ENCODE measurements at regions of chr11 and their contacts with region 1.

Region 1: GRCh38 chr11:86218125-86219084 is 26.1 kb upstream of the EED start:
- DNase-seq: peak; percentile 66
- ATAC-seq: peak; percentile 96
- H3K4me3 ChIP-seq: peak overlapping the region; percentile 28 to 50
- H3K27ac ChIP-seq: no peak overlapping the region
- H3K4me1 ChIP-seq: peaks cover 0 to 10% of the 10 kb centered on the region in 2 experiments; a peak in 1 of 4 replicates
- H3K27me3 ChIP-seq: no peaks in the 10 kb centered on the region
- CTCF ChIP-seq: peak; percentile 71 to 92 (median 87); a peak in 5 of 6 replicates
- POLR2A ChIP-seq: no peak
- RAD21 ChIP-seq: peak; percentile 81

Region 2: DNA sequence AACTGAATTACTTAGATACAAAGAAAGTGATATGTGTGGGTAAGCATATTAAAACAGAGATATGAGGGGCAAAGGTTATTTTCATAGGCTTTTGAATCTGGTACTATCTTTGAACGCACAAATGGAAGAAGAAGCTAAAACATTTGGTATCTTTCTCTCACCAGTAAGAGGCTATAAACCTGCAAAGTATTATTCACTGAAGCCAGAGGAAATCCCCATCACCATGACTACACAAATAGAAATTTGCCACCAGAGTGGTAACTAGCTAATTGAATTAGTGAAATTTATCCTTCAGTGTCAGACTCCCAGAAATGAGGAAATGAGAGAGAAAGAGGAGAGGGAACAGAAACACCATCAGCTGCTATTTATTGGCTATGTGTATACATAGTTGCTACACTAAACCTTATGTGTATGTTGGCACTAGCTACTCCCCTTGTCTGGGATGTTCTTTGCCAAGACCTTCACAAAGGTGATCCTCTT is 1094.6 kb before region 1 on chr11:
- CTCF ChIA-PET with region 1: no interaction called
- POLR2A ChIA-PET with region 1: no interaction called
- RAD21 ChIA-PET with region 1: no interaction called
- intact Hi-C with region 1: no loop called
- DNase-seq: no peak
- ATAC-seq: no peak
- H3K4me3 ChIP-seq: no peak overlapping the region
- H3K27ac ChIP-seq: no peak overlapping the region
- H3K4me1 ChIP-seq: no peaks in the 10 kb centered on the region
- H3K27me3 ChIP-seq: no peaks in the 10 kb centered on the region
- CTCF ChIP-seq: no peak
- POLR2A ChIP-seq: no peak
- RAD21 ChIP-seq: no peak

Region 3: DNA sequence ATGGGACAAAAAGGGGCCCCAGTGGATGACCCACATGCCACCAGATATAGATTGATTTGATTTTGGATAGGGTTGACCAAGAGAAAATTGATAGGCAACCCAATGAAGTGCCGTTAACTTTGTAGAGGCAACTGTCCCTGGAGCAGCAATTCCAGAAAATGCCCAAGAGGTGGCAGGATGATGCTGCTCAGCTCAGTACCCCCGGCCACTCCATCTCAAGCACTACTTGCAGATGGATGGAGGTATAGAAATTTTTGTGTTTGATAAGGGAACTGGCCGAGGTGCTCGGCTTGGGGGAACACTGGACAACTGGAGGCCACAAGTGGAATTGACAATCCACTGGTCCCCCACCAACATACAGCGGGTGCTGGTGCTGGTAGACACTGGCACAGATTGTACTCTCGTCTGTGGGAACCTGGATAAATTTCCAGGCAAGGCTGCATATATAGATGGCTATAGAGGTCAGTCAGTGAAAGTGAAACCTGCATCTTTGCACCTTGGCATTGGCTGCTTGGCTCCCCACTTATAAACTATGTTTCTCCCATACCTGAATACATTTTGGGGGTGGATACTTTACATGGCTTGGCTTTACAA is 276.9 kb before region 1 on chr11:
- CTCF ChIA-PET with region 1: no interaction called
- POLR2A ChIA-PET with region 1: no interaction called
- RAD21 ChIA-PET with region 1: no interaction called
- intact Hi-C with region 1: loop called (anchors 1 kb)
- DNase-seq: no peak
- ATAC-seq: peak; percentile 80
- H3K4me3 ChIP-seq: no peak overlapping the region
- H3K27ac ChIP-seq: no peak overlapping the region
- H3K4me1 ChIP-seq: no peaks in the 10 kb centered on the region
- H3K27me3 ChIP-seq: no peaks in the 10 kb centered on the region
- CTCF ChIP-seq: peak; percentile 47 to 59 (median 53); a peak in 5 of 6 replicates
- POLR2A ChIP-seq: no peak
- RAD21 ChIP-seq: peak; percentile 75

Region 4: DNA sequence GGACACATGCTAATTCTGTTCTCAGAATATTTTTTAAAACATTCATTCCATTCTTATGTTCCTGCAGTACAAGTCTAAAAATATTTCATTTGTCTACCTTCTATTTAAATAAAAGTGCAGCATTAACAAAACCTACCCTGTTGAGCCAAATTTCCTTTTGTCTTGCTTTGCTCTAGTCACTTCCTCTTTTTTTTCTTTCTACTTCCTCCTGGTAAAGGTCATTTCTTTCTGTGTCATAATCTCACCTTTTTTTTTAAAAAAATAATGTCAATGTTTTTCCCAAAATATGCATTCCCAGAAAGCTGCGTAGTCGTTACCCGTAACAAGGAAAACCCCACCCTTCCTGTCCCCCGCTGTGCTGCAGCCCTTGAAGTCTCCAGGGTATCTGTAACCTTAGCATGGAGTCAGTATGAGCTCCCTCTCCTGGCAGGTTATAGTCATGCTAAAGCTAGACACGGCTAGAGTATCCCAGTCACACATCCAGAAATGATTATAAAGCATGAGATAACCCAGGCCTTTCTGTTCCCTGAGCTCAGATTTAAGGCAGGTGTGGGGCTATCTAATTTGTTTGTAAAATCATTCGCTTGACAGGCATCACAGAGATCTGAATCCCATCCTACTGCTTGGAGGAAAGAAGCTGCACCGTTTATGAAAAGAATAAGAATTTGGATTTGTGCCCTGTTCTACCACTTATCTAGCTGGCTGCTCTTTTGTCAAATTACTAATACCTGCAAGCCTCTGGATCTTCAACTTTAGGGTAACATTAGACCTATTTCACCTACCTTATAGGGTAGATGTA is 24.9 kb before region 1 on chr11:
- CTCF ChIA-PET with region 1: interaction called, 15 read pairs
- POLR2A ChIA-PET with region 1: no interaction called
- RAD21 ChIA-PET with region 1: no interaction called
- intact Hi-C with region 1: no loop called
- DNase-seq: peak; percentile 86
- ATAC-seq: peak; percentile 100
- H3K4me3 ChIP-seq: peak overlapping the region; percentile 20 to 32; a peak in 3 of 4 replicates
- H3K27ac ChIP-seq: no peak overlapping the region
- H3K4me1 ChIP-seq: peaks cover 4 to 22% of the 10 kb centered on the region in 2 experiments; a peak in 3 of 4 replicates
- H3K27me3 ChIP-seq: no peaks in the 10 kb centered on the region
- CTCF ChIP-seq: peak; percentile 80 to 85 (median 84); a peak in 5 of 6 replicates
- POLR2A ChIP-seq: no peak
- RAD21 ChIP-seq: peak; percentile 86

Region 5: GRCh38 chr11:86230921-86231430 is 12.6 kb after region 1 on chr11:
- CTCF ChIA-PET with region 1: interaction called, 14 read pairs
- POLR2A ChIA-PET with region 1: no interaction called
- RAD21 ChIA-PET with region 1: no interaction called
- intact Hi-C with region 1: no loop called
- DNase-seq: no peak
- ATAC-seq: no peak
- H3K4me3 ChIP-seq: no peak overlapping the region
- H3K27ac ChIP-seq: no peak overlapping the region
- H3K4me1 ChIP-seq: peaks cover 5 to 26% of the 10 kb centered on the region in 2 experiments
- H3K27me3 ChIP-seq: no peaks in the 10 kb centered on the region
- CTCF ChIP-seq: no peak
- POLR2A ChIP-seq: no peak
- RAD21 ChIP-seq: no peak